ENCODE measurements at regions of chr10 and their contacts with region 1.

Region 1: GRCh38 chr10:52004342-52004949 is 305.1 kb upstream of the CSTF2T start:
- DNase-seq: no peak
- H3K4me3 Mint-ChIP-seq: no peak overlapping the region
- H3K27ac Mint-ChIP-seq: no peak overlapping the region
- H3K4me1 Mint-ChIP-seq: no peaks in the 10 kb centered on the region
- H3K27me3 Mint-ChIP-seq: peaks cover 8% of the 10 kb centered on the region

Region 2: GRCh38 chr10:51389415-51390321 is 614.8 kb before region 1 on chr10:
- CTCF ChIA-PET with region 1: interaction called, 8 read pairs
- POLR2A ChIA-PET with region 1: no interaction called
- intact Hi-C with region 1: loop called (anchors 1 kb)
- DNase-seq: peak; percentile 55
- H3K4me3 Mint-ChIP-seq: no peak overlapping the region
- H3K27ac Mint-ChIP-seq: no peak overlapping the region
- H3K4me1 Mint-ChIP-seq: no peaks in the 10 kb centered on the region
- H3K27me3 Mint-ChIP-seq: no peaks in the 10 kb centered on the region

Region 3: GRCh38 chr10:52064084-52064845 is 59.8 kb after region 1 on chr10:
- CTCF ChIA-PET with region 1: no interaction called
- POLR2A ChIA-PET with region 1: no interaction called
- intact Hi-C with region 1: no loop called
- DNase-seq: no peak
- H3K4me3 Mint-ChIP-seq: no peak overlapping the region
- H3K27ac Mint-ChIP-seq: no peak overlapping the region
- H3K4me1 Mint-ChIP-seq: no peaks in the 10 kb centered on the region
- H3K27me3 Mint-ChIP-seq: no peaks in the 10 kb centered on the region

Measured in activated CD4-positive, alpha-beta memory T cell treated with anti-CD3 and anti-CD28 coated beads for 36 hours (primary cell).